Esophagus squamous epithelium (tissue), 5 donors: ENCODE measurements at regions of chr20 and their contacts with region 1.

Region 1: GRCh38 chr20:32484958-32485769 is 100.0 kb downstream of the NOL4L start:
- DNase-seq: no peak
- H3K4me3 ChIP-seq: peak overlapping the region; percentile 59 to 90 (median 68)
- H3K27ac ChIP-seq: peak overlapping the region in 3 of 4 donors; percentile 72 to 92 (median 87)
- H3K4me1 ChIP-seq: peaks cover 25 to 52% (median 33%) of the 10 kb centered on the region in 3 donors
- H3K27me3 ChIP-seq: peaks cover 0 to 46% (median 0%) of the 10 kb centered on the region in 4 donors
- CTCF ChIP-seq: peak; percentile 55 to 90 (median 76)
- POLR2A ChIP-seq: no peak

Region 2: DNA sequence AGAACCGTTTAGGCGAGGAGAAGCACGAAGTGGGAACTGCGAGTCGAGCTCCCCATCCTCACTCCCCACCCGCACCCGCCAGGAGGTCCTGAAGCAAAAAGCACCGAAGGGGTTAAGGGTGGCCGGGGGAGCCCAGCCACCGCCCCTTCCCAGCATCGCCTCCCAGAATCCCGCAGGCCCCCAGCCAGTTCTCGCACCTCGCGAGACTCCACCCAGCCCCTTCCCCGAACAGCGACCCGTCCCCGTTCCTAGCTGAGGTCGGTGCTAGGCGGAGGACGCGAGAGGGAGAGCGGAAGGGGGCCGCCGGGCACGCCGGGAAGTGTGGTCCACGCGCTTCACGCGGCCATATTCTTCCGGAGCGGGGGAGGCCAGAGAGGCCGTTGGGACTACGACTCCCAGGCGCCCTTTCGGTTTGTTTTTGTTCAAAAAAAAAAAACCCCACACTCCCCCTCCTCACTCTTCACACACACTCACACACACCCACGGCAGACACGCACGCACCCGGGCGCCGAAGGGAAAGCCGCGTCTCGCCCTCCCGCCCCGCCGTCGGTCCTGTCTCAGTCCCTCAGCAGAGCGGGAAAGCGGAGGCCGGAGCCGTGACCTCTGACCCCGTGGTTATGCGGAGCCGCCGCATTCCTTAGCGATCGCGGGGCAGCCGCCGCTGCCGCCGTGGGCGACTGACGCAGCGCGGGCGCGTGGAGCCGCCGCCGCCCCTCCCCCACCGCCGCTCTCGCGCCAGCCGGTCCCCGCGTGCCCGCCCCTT is 127.1 kb before region 1 on chr20 and contains the start of gene ASXL1:
- intact Hi-C with region 1: loop called (anchors 10 kb)
- DNase-seq: peak; percentile 74
- H3K4me3 ChIP-seq: peak within 1 kb of the TSS; percentile 82 to 92 (median 89)
- H3K27ac ChIP-seq: peak within 1 kb of the TSS; percentile 95 to 99 (median 98)
- H3K4me1 ChIP-seq: peaks cover 10 to 59% (median 35%) of the 10 kb centered on the region in 3 donors
- H3K27me3 ChIP-seq: no peaks in the 10 kb centered on the region
- CTCF ChIP-seq: no peak
- POLR2A ChIP-seq: peak in 2 of 4 donors; percentile 34 to 46
- total RNA-seq, gene ASXL1: 14.3 to 49.2 (median 22.1) TPM

Region 3: GRCh38 chr20:32664678-32665159 is 179.6 kb after region 1 on chr20:
- intact Hi-C with region 1: no loop called
- DNase-seq: no peak
- H3K4me3 ChIP-seq: no peak overlapping the region
- H3K27ac ChIP-seq: no peak overlapping the region
- H3K4me1 ChIP-seq: peaks cover 0 to 14% (median 4%) of the 10 kb centered on the region in 3 donors
- H3K27me3 ChIP-seq: peaks cover 0 to 8% (median 0%) of the 10 kb centered on the region in 4 donors
- CTCF ChIP-seq: no peak
- POLR2A ChIP-seq: no peak